Activated CD8-positive, alpha-beta memory T cell treated with anti-CD3 and anti-CD28 coated beads, Interleukin-2, amount 10 ng/mL, durations not matched to agents 7 days and 5 days (primary cell): ENCODE measurements at regions of chr3 and their contacts with region 1.

Region 1: DNA sequence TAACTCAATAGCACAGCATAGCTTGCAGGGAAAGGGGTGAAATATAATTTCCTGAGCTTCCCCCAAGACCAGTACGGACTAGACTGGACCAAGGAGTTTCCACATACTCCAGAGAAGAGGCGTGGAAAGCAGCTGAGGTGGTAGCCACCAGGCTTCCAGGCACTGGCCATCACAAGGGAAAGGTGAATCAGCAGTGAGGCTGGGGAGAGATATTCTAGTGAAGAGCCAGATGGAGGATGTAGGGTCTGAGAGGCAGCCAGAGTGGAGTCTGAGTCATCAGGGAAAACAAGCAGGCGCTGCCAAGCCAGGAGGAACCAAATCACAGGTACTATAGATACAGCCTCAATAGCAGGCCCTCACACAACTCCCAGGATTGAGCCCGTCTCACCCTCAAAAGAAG is 9.6 kb upstream of the RASA2 start:
- DNase-seq: no peak
- ATAC-seq: no peak
- H3K4me3 Mint-ChIP-seq: no peak overlapping the region
- H3K27ac Mint-ChIP-seq: no peak overlapping the region
- H3K4me1 Mint-ChIP-seq: peaks cover 31% of the 10 kb centered on the region
- H3K27me3 Mint-ChIP-seq: peaks cover 14% of the 10 kb centered on the region

Region 2: DNA sequence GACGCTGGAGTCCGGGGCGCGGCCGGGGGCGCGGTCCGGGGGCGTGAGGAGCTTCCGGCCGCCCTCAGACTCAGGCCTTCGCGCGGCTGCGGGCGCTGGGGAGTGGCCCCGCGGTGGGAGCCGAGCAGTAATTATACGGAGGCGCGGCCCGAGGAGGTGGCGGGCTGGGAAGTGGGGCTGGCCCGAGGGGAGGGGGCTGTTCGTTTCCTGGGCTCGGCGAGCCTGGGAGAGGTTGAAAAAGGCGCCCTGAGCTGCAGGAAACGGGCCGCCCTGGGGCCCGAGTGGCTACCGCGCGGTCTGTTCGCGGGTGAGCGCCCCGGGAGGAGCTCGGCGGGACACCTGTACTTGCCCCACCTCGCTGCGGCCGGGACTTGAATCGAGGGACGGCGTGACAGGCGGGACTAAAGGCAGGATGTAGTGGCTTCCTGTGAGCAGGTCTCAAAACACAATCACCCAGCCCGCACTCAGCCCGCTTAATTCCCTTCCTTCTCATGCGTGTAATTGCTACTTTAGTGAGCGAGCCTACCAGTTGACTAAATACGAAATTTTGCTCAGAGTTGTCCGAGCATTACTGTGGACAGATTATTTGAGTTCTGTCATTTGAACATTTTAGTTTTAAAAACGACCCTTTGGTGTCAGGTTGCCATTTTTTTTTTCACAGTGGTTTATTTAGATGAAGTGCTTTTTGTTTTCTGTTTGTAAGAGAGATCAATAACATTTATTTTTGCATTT is 10.5 kb after region 1 on chr3:
- CTCF ChIA-PET with region 1: interaction called, 13 read pairs
- DNase-seq: peak; percentile 97
- ATAC-seq: peak; percentile 73
- H3K4me3 Mint-ChIP-seq: peak overlapping the region; percentile 83
- H3K27ac Mint-ChIP-seq: peak overlapping the region; percentile 98
- H3K4me1 Mint-ChIP-seq: peaks cover 65% of the 10 kb centered on the region
- H3K27me3 Mint-ChIP-seq: peaks cover 2% of the 10 kb centered on the region

Region 3: GRCh38 chr3:141544697-141545096 is 67.5 kb after region 1 on chr3:
- CTCF ChIA-PET with region 1: interaction called, 10 read pairs
- DNase-seq: no peak
- ATAC-seq: peak; percentile 91
- H3K4me3 Mint-ChIP-seq: peak overlapping the region; percentile 64
- H3K27ac Mint-ChIP-seq: peak overlapping the region; percentile 86
- H3K4me1 Mint-ChIP-seq: peaks cover 46% of the 10 kb centered on the region
- H3K27me3 Mint-ChIP-seq: no peaks in the 10 kb centered on the region